ENCODE measurements at regions of chr9 and their contacts with region 1.

Region 1: DNA sequence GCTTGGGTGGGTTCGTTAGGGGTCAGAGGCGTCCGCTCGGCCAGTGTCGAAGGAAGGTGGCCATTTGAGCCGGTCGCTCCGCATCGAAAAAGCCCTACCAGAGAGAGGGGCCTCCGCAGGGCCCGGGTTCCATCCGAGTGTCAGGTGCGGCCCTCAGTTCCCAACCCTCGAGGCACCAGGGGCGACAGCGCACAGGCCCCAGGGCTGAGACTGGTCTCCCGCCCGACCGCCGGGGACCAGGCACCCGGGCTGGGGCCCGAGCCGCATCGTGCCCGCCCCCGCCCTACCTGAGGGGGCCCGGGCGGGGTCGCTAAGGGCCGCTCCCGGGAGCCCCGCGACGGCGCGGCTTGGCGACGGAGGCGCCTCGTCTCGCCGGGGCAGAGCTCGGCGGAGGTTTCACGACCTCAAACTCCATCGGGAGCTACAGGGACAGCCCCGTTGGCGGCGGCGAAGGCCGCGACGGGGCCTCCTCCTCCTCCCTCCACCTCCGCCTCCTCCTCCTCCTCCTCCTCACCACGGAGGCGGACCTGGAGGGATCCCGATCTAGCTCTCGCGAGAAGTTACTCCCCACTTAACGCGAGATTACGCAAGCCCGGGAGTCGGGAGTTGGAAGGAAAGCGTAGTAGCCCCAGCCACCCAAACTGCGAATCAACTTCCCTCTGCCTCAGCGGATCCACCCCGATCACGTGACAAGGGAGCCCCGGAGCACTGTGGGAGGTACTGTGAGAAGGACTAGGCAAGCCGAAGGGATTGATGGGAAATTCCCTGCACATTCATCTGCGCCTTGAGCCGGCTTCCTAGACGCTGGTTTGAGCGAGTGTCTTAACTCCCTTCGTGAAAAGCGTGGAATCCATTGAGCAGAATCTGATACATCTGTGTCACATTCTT is at the start of gene RC3H2:
- DNase-seq: peak; percentile 97 to 99 (median 98)
- H3K4me3 ChIP-seq: peak within 1 kb of the TSS; percentile 91 to 93
- H3K4me3 Mint-ChIP-seq: peak within 1 kb of the TSS; percentile 92 to 99 (median 94)
- H3K27ac ChIP-seq: peak within 1 kb of the TSS; percentile 86
- H3K27ac Mint-ChIP-seq: peak within 1 kb of the TSS; percentile 97 to 99 (median 97)
- H3K4me1 ChIP-seq: peaks cover 38% of the 10 kb centered on the region
- H3K4me1 Mint-ChIP-seq: peaks cover 15 to 40% (median 24%) of the 10 kb centered on the region in 4 donors
- H3K27me3 ChIP-seq: no peaks in the 10 kb centered on the region
- H3K27me3 Mint-ChIP-seq: no peaks in the 10 kb centered on the region
- total RNA-seq, gene RC3H2: 66.6 to 70.7 TPM

Region 2: GRCh38 chr9:122835313-122835731 is 69.7 kb before region 1 on chr9:
- CTCF ChIA-PET with region 1: interaction called, 3 read pairs
- POLR2A ChIA-PET with region 1: interaction called, 12 read pairs
- intact Hi-C with region 1: no loop called
- DNase-seq: no peak
- H3K4me3 ChIP-seq: peak overlapping the region in 1 of 2 donors; percentile 4
- H3K4me3 Mint-ChIP-seq: peak overlapping the region; percentile 67 to 79 (median 75)
- H3K27ac ChIP-seq: no peak overlapping the region
- H3K27ac Mint-ChIP-seq: peak overlapping the region in 6 of 7 donors; percentile 41 to 80 (median 70)
- H3K4me1 ChIP-seq: peaks cover 15% of the 10 kb centered on the region
- H3K4me1 Mint-ChIP-seq: peaks cover 11 to 19% (median 18%) of the 10 kb centered on the region in 4 donors
- H3K27me3 ChIP-seq: no peaks in the 10 kb centered on the region
- H3K27me3 Mint-ChIP-seq: no peaks in the 10 kb centered on the region

Region 3: DNA sequence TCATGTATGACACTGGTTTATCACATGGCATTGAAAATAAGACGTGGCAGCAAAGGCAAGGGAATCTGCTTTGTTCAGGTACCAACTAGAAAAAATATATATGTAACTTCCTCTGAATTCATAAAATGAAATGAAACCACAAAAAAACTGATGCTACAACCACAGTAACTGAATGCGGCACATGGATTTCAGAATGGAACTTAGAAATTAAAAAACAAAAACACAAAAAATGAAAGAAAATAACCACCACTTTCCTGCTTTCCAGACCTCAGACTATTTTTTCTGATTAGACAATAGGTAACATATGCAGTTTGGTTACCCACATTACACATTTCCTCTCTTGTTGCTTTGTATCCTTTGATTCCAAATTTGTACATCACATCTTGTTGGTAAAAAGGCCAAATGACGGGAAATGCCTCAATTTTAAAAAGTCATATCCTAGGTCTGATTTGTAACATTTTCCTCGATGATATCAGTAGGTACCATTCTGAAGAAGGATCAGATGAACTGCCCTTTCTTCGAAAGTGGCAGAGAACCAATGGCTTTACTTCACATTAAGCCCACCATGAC is 58.6 kb before region 1 on chr9:
- CTCF ChIA-PET with region 1: no interaction called
- POLR2A ChIA-PET with region 1: no interaction called
- intact Hi-C with region 1: no loop called
- DNase-seq: peak; percentile 27 to 70 (median 56)
- H3K4me3 ChIP-seq: no peak overlapping the region
- H3K4me3 Mint-ChIP-seq: peak overlapping the region in 5 of 8 donors; percentile 18 to 55 (median 27)
- H3K27ac ChIP-seq: peak overlapping the region; percentile 9
- H3K27ac Mint-ChIP-seq: peak overlapping the region; percentile 44 to 95 (median 79)
- H3K4me1 ChIP-seq: peaks cover 21% of the 10 kb centered on the region
- H3K4me1 Mint-ChIP-seq: peaks cover 14 to 29% (median 25%) of the 10 kb centered on the region in 4 donors
- H3K27me3 ChIP-seq: no peaks in the 10 kb centered on the region
- H3K27me3 Mint-ChIP-seq: no peaks in the 10 kb centered on the region

Region 4: DNA sequence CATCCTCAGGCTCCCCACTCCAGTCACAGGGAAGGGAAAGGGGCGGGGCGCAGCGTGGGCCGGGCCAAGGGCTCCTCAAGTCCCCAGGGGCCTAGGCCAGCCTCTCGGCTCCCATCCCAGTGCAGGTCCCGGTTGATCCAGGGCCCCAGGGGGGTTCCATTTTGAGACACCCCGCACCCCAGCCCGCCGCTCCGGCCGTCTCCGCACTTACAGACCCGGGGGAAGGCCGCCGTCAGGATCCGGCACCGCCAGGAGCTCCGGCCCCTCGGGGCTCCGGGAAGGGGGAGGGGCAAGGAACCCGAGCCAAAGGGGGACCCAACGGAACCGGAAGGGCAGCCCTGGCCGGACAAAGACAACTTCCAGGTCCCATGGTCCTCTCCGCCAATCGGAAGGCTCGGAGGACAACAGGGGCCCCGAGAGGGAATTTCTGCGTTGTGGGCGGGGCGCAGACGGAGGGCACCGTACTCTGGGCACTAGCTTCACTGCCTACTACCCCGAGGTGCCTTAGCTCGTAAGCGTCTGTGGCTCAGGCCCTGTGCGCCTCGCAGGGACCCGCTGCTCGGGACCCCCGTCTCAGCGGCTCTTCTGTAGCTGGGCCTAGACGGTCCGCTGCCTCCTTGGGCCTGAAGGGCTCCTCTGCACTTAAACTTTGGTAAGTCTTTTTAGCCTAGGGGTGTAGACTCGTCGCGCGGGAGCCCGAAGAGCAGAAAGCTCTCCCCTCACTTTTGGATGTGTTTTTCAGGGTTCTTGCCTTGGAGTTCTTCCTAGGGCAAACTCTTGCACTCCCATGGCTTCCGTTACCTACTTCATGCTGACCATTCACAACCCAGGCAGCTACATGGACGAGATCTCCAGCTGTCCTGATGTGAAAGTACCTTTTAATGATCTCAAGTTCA is 26.4 kb after region 1 on chr9 and contains the start of gene ZBTB26:
- CTCF ChIA-PET with region 1: interaction called, 3 read pairs
- POLR2A ChIA-PET with region 1: interaction called, 70 read pairs
- intact Hi-C with region 1: loop called (anchors 1 kb)
- DNase-seq: peak; percentile 83 to 93 (median 86)
- H3K4me3 ChIP-seq: peak within 1 kb of the TSS; percentile 84 to 93
- H3K4me3 Mint-ChIP-seq: peak within 1 kb of the TSS in 1 of 8 donors; percentile 99
- H3K27ac ChIP-seq: peak within 1 kb of the TSS; percentile 94
- H3K27ac Mint-ChIP-seq: peak within 1 kb of the TSS in 3 of 7 donors; percentile 95 to 96 (median 95)
- H3K4me1 ChIP-seq: peaks cover 29% of the 10 kb centered on the region
- H3K4me1 Mint-ChIP-seq: peaks cover 11 to 28% (median 18%) of the 10 kb centered on the region in 4 donors
- H3K27me3 ChIP-seq: no peaks in the 10 kb centered on the region
- H3K27me3 Mint-ChIP-seq: no peaks in the 10 kb centered on the region
- total RNA-seq, gene ZBTB26: 10.5 to 10.9 TPM

Region 5: DNA sequence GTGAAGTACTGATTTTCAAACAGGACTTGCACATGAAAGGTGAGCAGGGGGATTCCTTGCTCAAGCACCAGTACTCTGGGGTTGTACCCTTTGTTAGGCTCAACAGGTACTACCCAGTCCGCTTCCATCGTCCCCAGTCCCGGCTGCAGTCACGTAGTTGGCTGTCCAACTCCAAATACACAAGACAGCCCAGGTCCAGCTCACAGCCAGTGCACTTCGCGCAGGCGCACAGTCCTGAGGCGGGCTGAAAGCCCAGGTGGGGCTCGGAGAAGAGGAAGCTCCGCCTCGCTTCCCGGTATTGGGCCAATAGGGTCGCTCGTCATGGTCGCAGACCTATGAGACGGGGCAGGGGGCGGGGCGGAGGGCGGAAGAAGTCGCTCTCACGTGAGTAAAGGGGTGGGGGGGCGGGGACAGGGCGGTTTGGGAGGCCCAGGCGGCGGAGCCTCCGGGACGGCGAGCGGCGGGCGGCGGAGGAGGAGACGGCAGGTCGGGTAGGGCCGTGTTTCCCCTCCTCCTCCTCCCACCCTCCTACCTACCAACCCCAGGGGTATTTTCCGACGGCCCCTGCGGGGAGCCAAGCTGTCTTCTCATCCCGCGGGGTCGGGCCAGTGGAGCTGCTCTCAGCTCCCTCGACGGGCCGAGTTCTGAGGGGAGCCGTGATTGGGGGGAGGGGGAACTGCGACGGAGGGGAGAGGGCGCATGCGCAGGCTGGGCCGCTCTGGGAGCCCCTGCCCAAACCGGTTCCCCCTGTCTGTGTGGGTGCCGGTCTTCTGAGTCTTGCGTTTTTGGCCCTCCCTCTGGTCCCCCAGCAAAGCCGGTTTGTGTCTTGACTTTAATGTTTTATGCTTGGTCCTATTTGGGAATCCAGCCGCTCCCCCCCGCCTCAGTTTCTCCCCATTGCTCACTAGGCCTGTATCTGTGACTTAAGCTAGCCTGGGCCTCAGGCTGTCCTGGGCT is 35.8 kb after region 1 on chr9 and contains the start of gene RABGAP1:
- CTCF ChIA-PET with region 1: interaction called, 3 read pairs
- POLR2A ChIA-PET with region 1: interaction called, 53 read pairs
- intact Hi-C with region 1: loop called (anchors 1 kb)
- DNase-seq: peak; percentile 94 to 99 (median 96)
- H3K4me3 ChIP-seq: peak within 1 kb of the TSS; percentile 80 to 88
- H3K4me3 Mint-ChIP-seq: peak within 1 kb of the TSS; percentile 89 to 98 (median 94)
- H3K27ac ChIP-seq: peak within 1 kb of the TSS; percentile 86
- H3K27ac Mint-ChIP-seq: peak within 1 kb of the TSS; percentile 91 to 98 (median 95)
- H3K4me1 ChIP-seq: peaks cover 26% of the 10 kb centered on the region
- H3K4me1 Mint-ChIP-seq: peaks cover 29 to 46% (median 33%) of the 10 kb centered on the region in 4 donors
- H3K27me3 ChIP-seq: no peaks in the 10 kb centered on the region
- H3K27me3 Mint-ChIP-seq: no peaks in the 10 kb centered on the region
- total RNA-seq, gene RABGAP1: 43.2 to 43.6 TPM

Region 6: DNA sequence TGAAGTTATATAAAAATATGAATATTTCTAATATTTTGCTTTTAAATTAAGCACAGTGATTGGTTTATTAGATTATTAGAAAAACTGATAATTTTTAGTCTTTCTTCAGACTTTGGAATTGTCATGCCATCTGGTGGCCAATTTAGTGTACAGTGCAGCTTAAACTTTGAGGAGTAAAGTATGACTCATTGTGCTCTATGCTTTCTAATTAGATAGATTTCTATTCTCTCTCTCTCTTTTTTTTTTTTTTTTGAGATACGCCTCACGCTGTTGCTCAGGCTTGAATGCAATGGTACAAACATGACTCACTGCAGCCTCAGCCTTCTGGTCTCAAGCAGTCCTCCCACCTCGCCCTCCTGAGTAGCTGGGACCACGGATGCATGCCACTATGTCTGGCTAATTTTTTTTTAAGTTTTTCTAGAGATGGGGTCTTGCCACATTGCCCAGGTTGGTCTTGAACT is 86.3 kb after region 1 on chr9:
- CTCF ChIA-PET with region 1: interaction called, 4 read pairs
- POLR2A ChIA-PET with region 1: interaction called, 3 read pairs
- intact Hi-C with region 1: loop called (anchors 5 kb)
- DNase-seq: peak; percentile 25 to 61 (median 32)
- H3K4me3 ChIP-seq: no peak overlapping the region
- H3K4me3 Mint-ChIP-seq: no peak overlapping the region
- H3K27ac ChIP-seq: no peak overlapping the region
- H3K27ac Mint-ChIP-seq: peak overlapping the region in 3 of 7 donors; percentile 29 to 88 (median 29)
- H3K4me1 ChIP-seq: no peaks in the 10 kb centered on the region
- H3K4me1 Mint-ChIP-seq: peaks cover 0 to 3% (median under 1%) of the 10 kb centered on the region in 4 donors
- H3K27me3 ChIP-seq: no peaks in the 10 kb centered on the region
- H3K27me3 Mint-ChIP-seq: no peaks in the 10 kb centered on the region

Region 7: DNA sequence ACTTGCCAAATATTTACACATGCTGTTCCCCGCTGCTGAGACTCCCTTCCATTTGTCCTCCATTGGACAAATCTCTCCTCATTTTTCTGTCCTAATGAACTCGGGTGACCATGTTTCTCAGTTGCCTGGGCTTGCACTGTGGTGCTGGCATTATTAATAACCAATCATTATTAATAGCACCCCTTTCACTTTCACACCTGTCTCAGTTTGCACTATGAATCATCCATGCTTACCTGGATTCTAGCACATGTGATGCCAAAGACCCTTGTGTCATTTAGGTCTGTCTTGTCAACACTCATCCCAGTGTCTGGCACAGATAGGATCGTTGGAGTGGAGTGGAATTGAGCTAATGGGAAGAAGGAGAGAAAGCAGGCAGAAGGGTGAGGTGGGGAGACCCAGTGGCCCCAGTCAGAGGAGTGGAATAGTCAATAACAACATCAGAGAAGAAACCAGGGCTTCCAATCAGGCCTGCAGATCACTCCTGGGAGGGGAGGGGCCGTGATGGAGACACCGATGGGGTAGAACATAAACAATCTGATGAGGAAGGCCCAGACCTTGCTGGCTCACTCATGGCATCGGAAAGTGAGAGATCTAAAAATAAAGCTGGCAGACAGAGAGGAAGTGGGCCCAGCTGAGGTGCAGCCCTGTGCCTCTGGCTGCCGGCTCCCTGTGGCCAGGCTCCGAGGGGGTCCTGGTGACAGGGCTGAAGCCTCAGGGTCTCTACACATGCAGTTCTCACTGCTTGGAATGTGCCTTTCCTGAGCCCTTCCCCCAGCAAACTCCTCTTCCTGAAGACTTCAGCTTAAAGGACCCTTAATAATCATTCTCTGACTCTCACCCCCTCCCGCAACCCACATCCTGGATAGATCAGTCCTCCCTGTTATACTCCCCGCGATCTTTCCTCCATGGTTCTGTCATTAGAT is 417.5 kb after region 1 on chr9:
- CTCF ChIA-PET with region 1: no interaction called
- POLR2A ChIA-PET with region 1: no interaction called
- intact Hi-C with region 1: loop called (anchors 10 kb)
- DNase-seq: peak; percentile 66 to 82 (median 75)
- H3K4me3 ChIP-seq: peak overlapping the region in 1 of 2 donors; percentile 49
- H3K4me3 Mint-ChIP-seq: peak overlapping the region; percentile 32 to 82 (median 76)
- H3K27ac ChIP-seq: peak overlapping the region; percentile 44
- H3K27ac Mint-ChIP-seq: peak overlapping the region; percentile 70 to 96 (median 92)
- H3K4me1 ChIP-seq: peaks cover 28% of the 10 kb centered on the region
- H3K4me1 Mint-ChIP-seq: peaks cover 22 to 45% (median 28%) of the 10 kb centered on the region in 4 donors
- H3K27me3 ChIP-seq: no peaks in the 10 kb centered on the region
- H3K27me3 Mint-ChIP-seq: no peaks in the 10 kb centered on the region